IMR-90 (cell line): ENCODE measurements at regions of chr4 and their contacts with region 1.

Region 1: DNA sequence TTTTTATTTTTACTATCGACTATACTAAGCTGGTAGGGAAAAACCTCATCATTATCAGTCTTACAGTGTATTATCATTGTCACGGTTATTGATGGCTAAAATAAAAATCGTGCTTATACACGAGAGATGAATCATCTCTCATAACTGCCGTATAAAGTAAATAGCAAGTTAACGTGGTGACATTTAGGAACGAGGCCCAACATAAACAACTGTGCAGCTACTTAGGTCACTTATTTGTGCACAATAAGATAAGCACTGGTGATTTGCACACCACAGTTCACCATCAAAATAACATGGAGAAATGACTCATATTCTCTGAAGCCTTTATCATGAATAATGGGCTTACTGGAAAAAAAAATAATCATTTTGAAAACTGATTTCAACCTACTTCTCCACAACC is 482.0 kb upstream of the TENM3 start:
- DNase-seq: peak; percentile 95
- ATAC-seq: peak; percentile 83
- H3K4me3 ChIP-seq: no peak overlapping the region
- H3K27ac ChIP-seq: no peak overlapping the region
- H3K4me1 ChIP-seq: peaks cover 2% of the 10 kb centered on the region; the same call in 1 of the 2 replicates
- H3K27me3 ChIP-seq: no peaks in the 10 kb centered on the region
- CTCF ChIP-seq: no peak
- POLR2A ChIP-seq: no peak
- RAD21 ChIP-seq: peak; percentile 15; the same call in 1 of the 2 replicates

Region 2: DNA sequence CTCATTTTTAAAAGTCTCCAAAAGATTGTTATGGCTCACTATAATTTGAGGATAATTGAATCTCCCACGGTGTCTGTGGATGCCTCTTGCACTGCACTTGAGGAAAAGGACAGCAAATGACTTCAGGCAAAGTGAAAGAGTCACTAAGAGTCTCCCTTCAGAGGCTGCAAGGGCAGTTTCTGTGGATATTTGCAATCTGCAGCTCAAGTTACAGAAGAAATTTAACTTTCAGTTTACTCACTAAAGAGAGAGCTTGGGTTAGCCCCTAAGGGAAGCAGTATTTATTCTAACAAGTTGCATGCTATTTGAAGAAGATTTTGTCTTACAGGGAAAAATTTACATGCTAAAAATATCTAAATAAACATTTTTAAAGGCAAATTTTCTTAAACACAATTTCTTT is 429.9 kb before region 1 on chr4:
- CTCF ChIA-PET with region 1: no interaction called
- POLR2A ChIA-PET with region 1: no interaction called
- dilution Hi-C with region 1: no loop called
- in situ Hi-C with region 1: no loop called
- intact Hi-C with region 1: no loop called
- DNase-seq: no peak
- ATAC-seq: no peak
- H3K4me3 ChIP-seq: no peak overlapping the region
- H3K27ac ChIP-seq: no peak overlapping the region
- H3K4me1 ChIP-seq: no peaks in the 10 kb centered on the region
- H3K27me3 ChIP-seq: no peaks in the 10 kb centered on the region
- CTCF ChIP-seq: no peak
- POLR2A ChIP-seq: no peak
- RAD21 ChIP-seq: no peak

Region 3: DNA sequence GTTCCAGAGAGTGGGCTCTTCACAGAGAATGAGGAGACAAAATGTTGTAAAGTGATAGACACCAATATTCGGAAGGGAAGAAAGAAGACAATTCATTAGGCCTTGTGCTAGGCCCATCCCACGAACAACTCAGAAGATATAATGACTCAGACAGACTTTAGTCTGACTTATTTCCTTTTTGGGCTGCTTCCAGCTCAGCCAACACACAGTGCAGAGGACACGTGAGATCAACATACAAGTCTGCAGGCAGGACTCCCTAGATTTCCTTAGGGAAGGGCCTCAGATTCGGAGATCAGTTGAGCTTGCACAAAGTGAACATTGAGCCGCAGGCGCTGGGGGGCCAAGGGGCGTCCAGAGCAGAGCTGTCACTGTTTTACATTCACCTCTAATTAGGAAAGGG is 191.3 kb after region 1 on chr4:
- CTCF ChIA-PET with region 1: no interaction called
- POLR2A ChIA-PET with region 1: no interaction called
- dilution Hi-C with region 1: no loop called
- in situ Hi-C with region 1: no loop called
- intact Hi-C with region 1: loop called (anchors 5 kb)
- DNase-seq: peak; percentile 96
- ATAC-seq: peak; percentile 85
- H3K4me3 ChIP-seq: no peak overlapping the region
- H3K27ac ChIP-seq: peak overlapping the region; percentile 39
- H3K4me1 ChIP-seq: peaks cover 6% of the 10 kb centered on the region
- H3K27me3 ChIP-seq: no peaks in the 10 kb centered on the region
- CTCF ChIP-seq: no peak
- POLR2A ChIP-seq: no peak
- RAD21 ChIP-seq: no peak

Region 4: GRCh38 chr4:181982437-181982836 is 221.3 kb after region 1 on chr4:
- CTCF ChIA-PET with region 1: no interaction called
- POLR2A ChIA-PET with region 1: no interaction called
- dilution Hi-C with region 1: no loop called
- in situ Hi-C with region 1: no loop called
- intact Hi-C with region 1: no loop called
- DNase-seq: no peak
- ATAC-seq: no peak
- H3K4me3 ChIP-seq: no peak overlapping the region
- H3K27ac ChIP-seq: no peak overlapping the region
- H3K4me1 ChIP-seq: no peaks in the 10 kb centered on the region
- H3K27me3 ChIP-seq: no peaks in the 10 kb centered on the region
- CTCF ChIP-seq: no peak
- POLR2A ChIP-seq: no peak
- RAD21 ChIP-seq: no peak